K562 (cell line): ENCODE measurements at regions of chrX and their contacts with region 1.

Region 1: DNA sequence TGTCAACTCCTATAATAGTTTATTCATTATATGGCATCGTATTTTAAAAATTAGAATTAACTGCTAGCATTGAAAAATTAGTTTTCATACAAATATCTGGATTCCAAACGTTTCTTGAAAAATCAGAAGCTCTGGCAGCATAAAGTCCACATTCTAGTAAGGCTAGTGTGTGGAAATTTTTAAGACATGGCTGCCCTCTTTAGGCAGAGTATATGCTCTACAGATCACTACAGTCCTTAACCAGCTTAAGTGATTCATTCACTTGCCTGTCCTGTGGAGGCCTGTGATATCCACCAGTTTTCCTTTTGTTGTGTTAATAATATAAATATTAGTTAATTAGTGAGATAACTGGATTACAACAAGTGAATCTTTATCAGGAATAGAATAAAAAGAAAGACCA is 287.2 kb downstream of the OPHN1 start:
- DNase-seq: peak in 2 of 4 experiments; percentile 21 to 34
- ATAC-seq: peak; percentile 93
- H3K4me3 ChIP-seq: no peak overlapping the region
- H3K27ac ChIP-seq: no peak overlapping the region
- H3K4me1 ChIP-seq: no peaks in the 10 kb centered on the region
- H3K27me3 ChIP-seq: no peaks in the 10 kb centered on the region
- CTCF ChIP-seq: peak; percentile 17 to 58 (median 40); a peak in 4 of 6 replicates
- EP300 ChIP-seq: no peak
- POLR2A ChIP-seq: no peak
- RAD21 ChIP-seq: peak; percentile 17 to 55; a peak in 3 of 4 replicates

Region 2: DNA sequence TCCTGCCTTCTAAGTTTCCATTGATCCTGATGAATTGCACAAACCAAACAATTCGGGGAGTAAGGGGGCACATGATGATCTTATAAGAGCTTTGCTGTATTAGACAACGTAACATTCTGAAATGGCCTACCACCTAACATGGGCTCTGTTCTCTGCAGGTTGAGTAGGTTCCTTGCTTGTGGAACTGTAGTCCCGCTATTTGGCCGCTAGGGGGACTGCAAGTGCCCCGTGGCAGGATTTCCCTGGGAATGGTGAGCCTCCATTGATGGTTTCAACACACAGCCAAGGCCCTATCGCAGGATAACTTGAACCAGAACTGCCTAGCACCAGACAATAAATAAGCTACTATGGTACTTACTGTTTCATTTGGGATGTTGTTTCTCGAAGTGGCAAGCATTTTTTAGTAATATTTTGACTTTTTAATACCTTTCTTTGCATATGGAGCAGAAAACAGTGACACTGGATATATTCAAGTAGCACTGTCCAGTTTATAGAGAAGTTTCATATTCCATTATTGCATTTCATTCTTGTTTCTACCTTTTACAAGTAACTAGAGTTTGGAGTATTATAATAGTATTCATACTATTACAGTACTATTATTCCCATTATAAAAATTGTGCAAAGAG is 590.4 kb before region 1 on chrX:
- CTCF ChIA-PET with region 1: no interaction called
- POLR2A ChIA-PET with region 1: no interaction called
- in situ Hi-C with region 1: no loop called
- intact Hi-C with region 1: loop called (anchors 10 kb)
- DNase-seq: peak; percentile 30 to 43 (median 40)
- ATAC-seq: peak; percentile 77
- H3K4me3 ChIP-seq: no peak overlapping the region
- H3K27ac ChIP-seq: no peak overlapping the region
- H3K4me1 ChIP-seq: no peaks in the 10 kb centered on the region
- H3K27me3 ChIP-seq: no peaks in the 10 kb centered on the region
- CTCF ChIP-seq: peak; percentile 58 to 68 (median 62)
- EP300 ChIP-seq: no peak
- POLR2A ChIP-seq: no peak
- RAD21 ChIP-seq: peak in 1 of 2 experiments; percentile 47; a peak in 2 of 4 replicates

Region 3: DNA sequence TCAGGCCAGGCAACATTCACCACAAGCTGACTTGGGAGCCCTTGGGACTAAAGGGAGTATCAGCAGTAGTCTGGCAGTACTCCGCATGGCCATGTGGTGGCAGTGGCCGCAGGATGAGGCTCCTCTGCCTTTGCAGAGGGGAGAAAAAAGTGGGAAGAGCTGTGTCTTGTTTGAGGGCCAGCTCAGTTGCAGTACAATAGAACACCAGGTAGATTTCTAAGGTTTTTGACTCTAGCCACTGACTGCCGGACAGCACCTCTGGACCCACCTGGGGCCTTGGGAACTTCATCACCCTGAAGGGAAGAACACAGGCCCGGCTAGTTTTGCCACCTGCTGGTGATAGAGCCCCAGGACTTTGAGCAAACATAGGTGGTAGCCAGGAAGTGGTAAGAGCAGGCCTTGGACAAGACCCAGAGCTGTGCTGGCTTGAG is 127.4 kb before region 1 on chrX:
- CTCF ChIA-PET with region 1: no interaction called
- POLR2A ChIA-PET with region 1: no interaction called
- in situ Hi-C with region 1: no loop called
- intact Hi-C with region 1: loop called (anchors 10 kb)
- DNase-seq: peak in 3 of 4 experiments; percentile 7 to 23 (median 7)
- ATAC-seq: peak; percentile 92
- H3K4me3 ChIP-seq: no peak overlapping the region
- H3K27ac ChIP-seq: no peak overlapping the region
- H3K4me1 ChIP-seq: no peaks in the 10 kb centered on the region
- H3K27me3 ChIP-seq: no peaks in the 10 kb centered on the region
- CTCF ChIP-seq: peak; percentile 52 to 73 (median 66)
- EP300 ChIP-seq: no peak
- POLR2A ChIP-seq: no peak
- RAD21 ChIP-seq: peak in 1 of 2 experiments; percentile 32; a peak in 1 of 4 replicates

Region 4: GRCh38 chrX:68049466-68049865 is 96.6 kb before region 1 on chrX:
- CTCF ChIA-PET with region 1: no interaction called
- POLR2A ChIA-PET with region 1: no interaction called
- in situ Hi-C with region 1: no loop called
- intact Hi-C with region 1: no loop called
- DNase-seq: no peak
- ATAC-seq: no peak
- H3K4me3 ChIP-seq: no peak overlapping the region
- H3K27ac ChIP-seq: no peak overlapping the region
- H3K4me1 ChIP-seq: no peaks in the 10 kb centered on the region
- H3K27me3 ChIP-seq: no peaks in the 10 kb centered on the region
- CTCF ChIP-seq: no peak
- EP300 ChIP-seq: no peak
- POLR2A ChIP-seq: no peak
- RAD21 ChIP-seq: no peak

Region 5: DNA sequence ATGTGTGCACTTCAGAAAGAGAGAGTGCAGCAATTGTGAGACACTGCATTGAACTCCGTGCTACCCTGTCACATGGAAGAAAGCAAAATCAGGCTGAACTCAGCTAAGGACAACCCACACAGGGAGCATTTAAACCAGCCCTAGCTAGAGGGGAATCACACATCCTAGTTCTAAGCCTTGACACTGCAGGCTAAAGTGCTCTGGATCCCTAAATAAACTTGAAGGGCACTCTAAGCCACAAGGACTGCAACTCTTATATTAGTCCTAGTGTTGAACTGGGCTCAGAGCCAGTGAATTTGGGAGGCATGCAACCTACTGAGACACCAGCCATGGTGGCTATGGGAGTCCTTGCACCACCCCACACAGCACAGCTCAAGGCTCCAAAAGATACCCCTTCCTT is 24.7 kb before region 1 on chrX:
- CTCF ChIA-PET with region 1: no interaction called
- POLR2A ChIA-PET with region 1: no interaction called
- in situ Hi-C with region 1: no loop called
- intact Hi-C with region 1: no loop called
- DNase-seq: no peak
- ATAC-seq: no peak
- H3K4me3 ChIP-seq: no peak overlapping the region
- H3K27ac ChIP-seq: no peak overlapping the region
- H3K4me1 ChIP-seq: no peaks in the 10 kb centered on the region
- H3K27me3 ChIP-seq: no peaks in the 10 kb centered on the region
- CTCF ChIP-seq: no peak
- EP300 ChIP-seq: no peak
- POLR2A ChIP-seq: no peak
- RAD21 ChIP-seq: no peak